ENCODE measurements at regions of chr21 and their contacts with region 1.

Region 1: GRCh38 chr21:35400233-35400957 is 351.3 kb upstream of the RUNX1 start:
- DNase-seq: peak; percentile 39 to 66 (median 63)
- H3K4me3 ChIP-seq: no peak overlapping the region
- H3K4me3 Mint-ChIP-seq: no peak overlapping the region
- H3K27ac ChIP-seq: no peak overlapping the region
- H3K27ac Mint-ChIP-seq: no peak overlapping the region
- H3K4me1 ChIP-seq: no peaks in the 10 kb centered on the region
- H3K4me1 Mint-ChIP-seq: peaks cover 0 to 2% (median under 1%) of the 10 kb centered on the region in 4 donors
- H3K27me3 ChIP-seq: no peaks in the 10 kb centered on the region
- H3K27me3 Mint-ChIP-seq: peaks cover 1 to 3% of the 10 kb centered on the region in 2 donors

Region 2: GRCh38 chr21:34693192-34693810 is 707.1 kb before region 1 on chr21:
- CTCF ChIA-PET with region 1: interaction called, 7 read pairs
- POLR2A ChIA-PET with region 1: no interaction called
- intact Hi-C with region 1: loop called (anchors 1 kb)
- DNase-seq: peak in 4 of 5 donors; percentile 42 to 57 (median 50)
- H3K4me3 ChIP-seq: no peak overlapping the region
- H3K4me3 Mint-ChIP-seq: no peak overlapping the region
- H3K27ac ChIP-seq: no peak overlapping the region
- H3K27ac Mint-ChIP-seq: no peak overlapping the region
- H3K4me1 ChIP-seq: no peaks in the 10 kb centered on the region
- H3K4me1 Mint-ChIP-seq: peaks cover 0 to 4% (median 0%) of the 10 kb centered on the region in 4 donors
- H3K27me3 ChIP-seq: no peaks in the 10 kb centered on the region
- H3K27me3 Mint-ChIP-seq: peaks cover 13 to 27% of the 10 kb centered on the region in 2 donors

Region 3: DNA sequence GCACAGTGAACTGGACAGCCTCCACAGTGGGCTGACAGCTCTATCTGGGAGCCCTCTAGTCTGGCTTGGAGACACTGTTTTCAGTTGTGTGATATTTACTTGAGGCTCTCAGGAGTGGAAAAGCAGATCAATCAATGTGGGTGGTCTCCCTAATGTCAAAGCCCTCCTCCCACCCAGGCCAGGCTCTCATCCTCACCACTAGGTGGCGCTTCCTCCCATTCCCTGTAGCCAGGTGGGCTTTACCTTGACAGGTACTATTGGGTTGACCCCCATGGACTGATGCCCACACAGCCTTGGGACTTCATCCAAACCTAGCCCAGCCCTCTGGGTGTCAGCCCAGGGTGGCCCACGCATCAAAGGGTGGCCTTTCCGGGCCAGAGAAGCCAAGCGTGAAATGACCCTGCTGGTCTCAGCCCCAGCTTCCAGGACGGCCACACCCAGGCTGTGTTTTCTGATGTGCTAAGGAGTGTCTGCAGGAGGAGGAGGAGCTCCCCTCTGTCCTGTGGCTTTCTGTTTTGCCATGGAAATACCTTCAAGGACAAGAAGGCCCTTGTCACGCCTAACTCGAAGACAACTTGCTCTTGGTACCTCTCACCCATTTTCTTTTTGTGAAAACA is 677.6 kb before region 1 on chr21:
- CTCF ChIA-PET with region 1: interaction called, 8 read pairs
- POLR2A ChIA-PET with region 1: no interaction called
- intact Hi-C with region 1: loop called (anchors 1 kb)
- DNase-seq: peak; percentile 5 to 40 (median 11)
- H3K4me3 ChIP-seq: no peak overlapping the region
- H3K4me3 Mint-ChIP-seq: no peak overlapping the region
- H3K27ac ChIP-seq: no peak overlapping the region
- H3K27ac Mint-ChIP-seq: no peak overlapping the region
- H3K4me1 ChIP-seq: no peaks in the 10 kb centered on the region
- H3K4me1 Mint-ChIP-seq: no peaks in the 10 kb centered on the region
- H3K27me3 ChIP-seq: no peaks in the 10 kb centered on the region
- H3K27me3 Mint-ChIP-seq: peaks cover 3 to 12% of the 10 kb centered on the region in 2 donors

Region 4: DNA sequence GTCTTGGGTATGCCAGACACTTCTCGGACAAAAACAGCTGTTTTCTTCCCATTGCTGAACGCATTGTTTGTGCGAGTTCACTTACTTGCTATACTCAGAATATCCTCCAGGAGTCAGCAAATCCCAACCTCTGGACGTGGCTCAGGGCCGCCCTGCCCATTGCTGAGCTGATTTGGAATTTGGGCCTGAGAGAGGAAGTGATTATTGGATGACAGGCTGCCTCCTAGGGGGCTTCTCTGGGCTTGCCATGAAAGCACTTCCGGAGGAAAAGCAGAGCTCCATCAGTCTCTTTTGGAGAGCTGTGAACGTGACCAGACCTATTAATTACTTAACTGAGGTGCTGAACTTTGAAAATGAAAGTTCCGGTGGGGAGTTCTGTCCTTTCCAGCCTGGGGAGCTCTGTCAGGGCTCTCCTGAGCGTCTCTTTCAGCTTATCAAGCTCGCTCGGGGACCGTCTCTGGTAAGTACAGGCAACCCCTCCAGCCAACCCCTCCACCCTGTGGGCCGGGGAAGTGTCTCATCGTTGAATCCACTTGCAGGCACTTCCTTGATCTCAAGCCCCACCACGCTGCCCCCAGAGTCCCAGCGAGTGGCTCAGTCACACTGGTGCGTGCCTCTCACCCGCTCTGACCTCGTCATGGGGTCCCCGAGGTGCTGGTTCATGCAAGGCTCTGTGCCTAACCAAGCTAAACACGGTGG is 654.7 kb before region 1 on chr21:
- CTCF ChIA-PET with region 1: interaction called, 60 read pairs
- POLR2A ChIA-PET with region 1: interaction called, 6 read pairs
- intact Hi-C with region 1: loop called (anchors 1 kb)
- DNase-seq: peak; percentile 43 to 63 (median 53)
- H3K4me3 ChIP-seq: no peak overlapping the region
- H3K4me3 Mint-ChIP-seq: peak overlapping the region in 3 of 8 donors; percentile 17 to 55 (median 50)
- H3K27ac ChIP-seq: no peak overlapping the region
- H3K27ac Mint-ChIP-seq: no peak overlapping the region
- H3K4me1 ChIP-seq: peaks cover 8% of the 10 kb centered on the region
- H3K4me1 Mint-ChIP-seq: peaks cover 0 to 4% (median 2%) of the 10 kb centered on the region in 4 donors
- H3K27me3 ChIP-seq: no peaks in the 10 kb centered on the region
- H3K27me3 Mint-ChIP-seq: peaks cover 7 to 8% of the 10 kb centered on the region in 2 donors

Region 5: DNA sequence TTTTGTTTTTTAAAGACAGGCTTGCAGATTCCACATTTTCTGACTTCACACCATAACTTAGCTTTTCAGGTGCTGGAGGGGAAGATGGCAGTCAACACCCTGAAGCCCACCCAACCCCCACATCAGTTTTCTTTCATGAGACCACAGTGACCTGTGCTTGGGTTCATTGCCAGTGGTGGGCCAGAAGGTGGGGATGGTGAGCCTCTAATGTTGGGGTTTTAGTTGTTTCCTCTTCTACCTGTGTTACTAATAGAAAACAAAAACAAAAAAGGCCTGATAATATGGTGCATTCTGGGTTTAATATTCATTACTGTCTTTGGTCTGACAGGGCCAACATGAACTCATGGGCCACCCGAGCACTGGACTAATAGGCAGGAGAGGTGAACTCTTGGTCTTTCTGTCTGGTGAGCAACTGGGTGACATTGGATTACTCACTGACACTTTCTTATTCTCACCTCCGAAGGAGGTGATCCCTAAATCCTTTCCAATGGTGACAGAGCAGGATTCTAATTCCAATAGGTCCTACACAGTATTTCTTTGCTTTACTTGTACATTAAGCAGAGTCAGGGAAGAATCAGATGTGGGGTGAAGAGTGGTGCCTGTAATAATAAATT is 598.8 kb before region 1 on chr21:
- CTCF ChIA-PET with region 1: interaction called, 4 read pairs
- POLR2A ChIA-PET with region 1: no interaction called
- intact Hi-C with region 1: loop called (anchors 1 kb)
- DNase-seq: no peak
- H3K4me3 ChIP-seq: no peak overlapping the region
- H3K4me3 Mint-ChIP-seq: no peak overlapping the region
- H3K27ac ChIP-seq: no peak overlapping the region
- H3K27ac Mint-ChIP-seq: peak overlapping the region in 6 of 7 donors; percentile 6 to 72 (median 57)
- H3K4me1 ChIP-seq: no peaks in the 10 kb centered on the region
- H3K4me1 Mint-ChIP-seq: peaks cover 17 to 32% (median 21%) of the 10 kb centered on the region in 4 donors
- H3K27me3 ChIP-seq: no peaks in the 10 kb centered on the region
- H3K27me3 Mint-ChIP-seq: no peaks in the 10 kb centered on the region

Region 6: GRCh38 chr21:35840197-35840799 is 439.9 kb after region 1 on chr21:
- CTCF ChIA-PET with region 1: interaction called, 5 read pairs
- POLR2A ChIA-PET with region 1: no interaction called
- intact Hi-C with region 1: loop called (anchors 1 kb)
- DNase-seq: peak; percentile 43 to 53 (median 44)
- H3K4me3 ChIP-seq: no peak overlapping the region
- H3K4me3 Mint-ChIP-seq: no peak overlapping the region
- H3K27ac ChIP-seq: no peak overlapping the region
- H3K27ac Mint-ChIP-seq: no peak overlapping the region
- H3K4me1 ChIP-seq: no peaks in the 10 kb centered on the region
- H3K4me1 Mint-ChIP-seq: no peaks in the 10 kb centered on the region
- H3K27me3 ChIP-seq: no peaks in the 10 kb centered on the region
- H3K27me3 Mint-ChIP-seq: peaks cover 0 to 6% of the 10 kb centered on the region in 2 donors

Region 7: GRCh38 chr21:36028127-36029069 is 628.0 kb after region 1 on chr21:
- CTCF ChIA-PET with region 1: interaction called, 3 read pairs
- POLR2A ChIA-PET with region 1: no interaction called
- intact Hi-C with region 1: loop called (anchors 2 kb)
- DNase-seq: peak; percentile 51 to 65 (median 57)
- H3K4me3 ChIP-seq: no peak overlapping the region
- H3K4me3 Mint-ChIP-seq: peak overlapping the region in 1 of 8 donors; percentile 9
- H3K27ac ChIP-seq: no peak overlapping the region
- H3K27ac Mint-ChIP-seq: peak overlapping the region in 2 of 7 donors; percentile 4 to 30
- H3K4me1 ChIP-seq: peaks cover 3% of the 10 kb centered on the region
- H3K4me1 Mint-ChIP-seq: peaks cover 4 to 7% (median 5%) of the 10 kb centered on the region in 4 donors
- H3K27me3 ChIP-seq: no peaks in the 10 kb centered on the region
- H3K27me3 Mint-ChIP-seq: no peaks in the 10 kb centered on the region

Measured in CD4-positive, alpha-beta memory T cell (primary cell).